ENCODE measurements at regions of chr5 and their contacts with region 1.

Region 1: GRCh38 chr5:59296317-59297264 is 596.9 kb downstream of the PDE4D start:
- DNase-seq: peak; percentile 83
- H3K4me3 ChIP-seq: peak overlapping the region in 2 of 3 experiments; percentile 48 to 70
- H3K27ac ChIP-seq: peak overlapping the region; percentile 73
- H3K4me1 ChIP-seq: peaks cover 63% of the 10 kb centered on the region
- H3K27me3 ChIP-seq: no peaks in the 10 kb centered on the region
- CTCF ChIP-seq: no peak
- POLR2A ChIP-seq: no peak

Region 2: GRCh38 chr5:57779383-57780223 is 1517.0 kb before region 1 on chr5:
- CTCF ChIA-PET with region 1: no interaction called
- POLR2A ChIA-PET with region 1: no interaction called
- dilution Hi-C with region 1: no loop called
- intact Hi-C with region 1: no loop called
- DNase-seq: peak; percentile 90
- H3K4me3 ChIP-seq: peak overlapping the region in 1 of 3 experiments; percentile 3
- H3K27ac ChIP-seq: peak overlapping the region; percentile 71
- H3K4me1 ChIP-seq: peaks cover 37% of the 10 kb centered on the region
- H3K27me3 ChIP-seq: no peaks in the 10 kb centered on the region
- CTCF ChIP-seq: peak; percentile 30 to 53
- POLR2A ChIP-seq: no peak

Region 3: DNA sequence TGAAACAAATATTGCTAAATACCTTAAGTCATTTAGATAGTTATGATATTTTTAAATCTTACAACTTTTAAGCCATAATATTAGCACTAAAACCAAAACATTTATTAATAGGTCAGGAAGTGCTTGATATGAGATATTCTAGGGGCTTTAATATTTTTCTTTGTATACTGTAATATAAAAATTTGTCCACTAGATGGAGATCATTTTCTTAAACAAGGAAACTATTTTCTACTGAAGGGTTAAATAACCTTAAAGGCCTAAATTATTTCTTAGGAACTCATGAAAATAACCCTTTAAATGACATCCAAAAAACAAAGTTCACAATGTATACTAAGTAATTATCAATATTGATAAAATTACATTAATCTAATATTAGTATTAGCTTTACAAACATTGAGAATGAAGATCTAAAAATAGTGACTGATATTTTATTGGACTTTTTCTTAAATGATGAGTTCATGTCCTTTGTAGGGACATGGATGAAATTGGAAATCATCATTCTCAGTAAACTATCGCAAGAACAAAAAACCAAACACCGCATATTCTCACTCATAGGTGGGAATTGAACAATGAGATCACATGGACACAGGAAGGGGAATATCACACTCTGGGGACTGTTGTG is 78.1 kb before region 1 on chr5:
- CTCF ChIA-PET with region 1: interaction called, 11 read pairs
- POLR2A ChIA-PET with region 1: interaction called, 3 read pairs
- dilution Hi-C with region 1: no loop called
- intact Hi-C with region 1: loop called (anchors 1 kb)
- DNase-seq: peak; percentile 54
- H3K4me3 ChIP-seq: no peak overlapping the region
- H3K27ac ChIP-seq: no peak overlapping the region
- H3K4me1 ChIP-seq: peaks cover 19% of the 10 kb centered on the region
- H3K27me3 ChIP-seq: no peaks in the 10 kb centered on the region
- CTCF ChIP-seq: peak in 1 of 2 donors; percentile 2
- POLR2A ChIP-seq: no peak

Region 4: DNA sequence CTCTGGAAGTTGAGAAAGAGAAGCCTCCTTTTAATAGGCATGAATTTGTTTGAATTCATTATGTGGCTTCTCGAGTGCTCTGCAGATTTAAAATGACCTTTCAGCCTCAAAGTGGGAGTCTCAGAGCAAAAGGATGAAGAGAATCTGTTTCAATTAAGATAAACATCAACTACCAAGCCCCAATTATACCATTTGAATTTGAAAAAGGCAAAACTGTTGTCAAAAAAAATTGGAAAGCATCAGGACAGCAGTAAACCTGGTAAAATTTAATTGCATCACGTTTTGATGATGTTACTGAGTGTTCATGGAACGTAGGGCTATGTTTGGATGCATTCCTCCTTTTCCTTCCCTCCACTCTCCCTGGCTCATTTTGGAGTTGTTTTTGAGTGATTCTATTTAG is 40.3 kb before region 1 on chr5:
- CTCF ChIA-PET with region 1: no interaction called
- POLR2A ChIA-PET with region 1: no interaction called
- dilution Hi-C with region 1: no loop called
- intact Hi-C with region 1: no loop called
- DNase-seq: no peak
- H3K4me3 ChIP-seq: no peak overlapping the region
- H3K27ac ChIP-seq: no peak overlapping the region
- H3K4me1 ChIP-seq: peaks cover 5% of the 10 kb centered on the region
- H3K27me3 ChIP-seq: no peaks in the 10 kb centered on the region
- CTCF ChIP-seq: no peak
- POLR2A ChIP-seq: no peak

Region 5: GRCh38 chr5:59275510-59276324 is 20.9 kb before region 1 on chr5:
- CTCF ChIA-PET with region 1: interaction called, 9 read pairs
- POLR2A ChIA-PET with region 1: interaction called, 3 read pairs
- dilution Hi-C with region 1: no loop called
- intact Hi-C with region 1: loop called (anchors 1 kb)
- DNase-seq: peak; percentile 85
- H3K4me3 ChIP-seq: peak overlapping the region; percentile 34 to 97 (median 52)
- H3K27ac ChIP-seq: peak overlapping the region; percentile 90
- H3K4me1 ChIP-seq: peaks cover 25% of the 10 kb centered on the region
- H3K27me3 ChIP-seq: no peaks in the 10 kb centered on the region
- CTCF ChIP-seq: no peak
- POLR2A ChIP-seq: peak; percentile 5

Region 6: DNA sequence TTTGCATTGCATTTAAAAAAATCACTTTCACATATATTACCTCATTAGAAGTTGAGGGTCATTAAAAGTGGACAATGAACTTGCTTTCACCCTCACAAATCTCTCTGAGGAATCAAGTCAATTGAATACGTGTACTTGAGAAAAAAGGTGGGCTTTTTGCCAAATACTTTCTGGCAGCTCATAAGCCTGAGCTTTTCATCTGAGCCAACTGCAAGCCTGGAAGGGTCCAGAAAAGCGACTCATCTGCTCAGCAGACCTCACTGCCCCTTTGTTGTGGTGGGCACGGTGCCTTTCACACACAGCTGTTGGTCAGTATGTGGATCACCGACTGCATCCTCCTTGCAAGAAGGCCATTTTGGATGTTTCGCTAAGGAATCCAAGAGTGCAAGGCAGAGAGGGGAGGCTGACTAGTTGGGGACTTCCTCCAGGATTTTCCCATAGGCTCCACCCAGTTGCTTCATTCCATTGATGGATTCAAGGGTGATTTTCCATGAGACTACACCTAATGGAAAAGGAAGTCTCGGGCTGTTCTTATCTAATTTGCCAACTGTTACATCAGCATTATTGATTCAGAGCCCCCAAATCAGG is 32.2 kb after region 1 on chr5:
- CTCF ChIA-PET with region 1: interaction called, 10 read pairs
- POLR2A ChIA-PET with region 1: no interaction called
- dilution Hi-C with region 1: no loop called
- intact Hi-C with region 1: no loop called
- DNase-seq: peak; percentile 85
- H3K4me3 ChIP-seq: no peak overlapping the region
- H3K27ac ChIP-seq: no peak overlapping the region
- H3K4me1 ChIP-seq: peaks cover 4% of the 10 kb centered on the region
- H3K27me3 ChIP-seq: peaks cover 3% of the 10 kb centered on the region in 2 experiments
- CTCF ChIP-seq: no peak
- POLR2A ChIP-seq: no peak

Region 7: DNA sequence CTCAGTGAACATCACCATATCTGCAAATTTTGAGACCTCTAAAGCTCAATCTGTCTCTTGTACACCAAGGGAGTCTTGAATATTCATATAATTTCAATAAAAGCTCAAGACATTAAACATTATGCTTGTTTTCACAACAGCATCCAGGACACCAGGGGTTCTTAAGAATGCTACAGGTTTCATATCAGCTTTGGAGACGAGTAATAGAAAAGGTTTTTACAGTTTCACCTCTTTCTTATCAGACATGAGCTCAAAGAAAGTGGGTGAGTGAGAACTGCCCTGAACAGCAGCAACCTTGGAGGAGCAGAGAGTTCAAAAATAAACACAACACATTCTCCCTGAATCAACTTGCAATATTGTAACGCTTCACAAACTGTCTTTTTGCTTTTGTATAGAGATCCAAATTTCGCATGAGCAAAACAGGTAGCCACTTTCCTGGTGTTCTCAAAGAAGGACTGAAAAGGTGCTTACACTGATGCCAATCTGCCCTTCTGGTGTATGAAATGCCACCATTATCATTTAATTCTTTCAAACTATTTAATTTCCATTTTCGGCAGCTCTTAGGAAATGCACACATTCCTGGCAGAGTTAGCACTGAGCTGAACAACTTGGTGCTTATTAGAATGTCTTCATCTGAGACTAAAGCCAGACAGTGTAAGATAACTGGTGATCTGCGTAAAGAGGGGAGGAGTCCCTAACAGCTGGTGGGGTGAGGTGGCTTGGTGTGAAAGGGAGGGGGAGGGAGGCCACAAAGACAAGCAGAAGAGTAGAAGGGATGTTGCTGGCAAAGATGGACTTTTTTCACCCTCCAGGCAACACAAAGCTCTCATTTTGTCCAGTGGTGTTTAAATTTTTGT is 61.6 kb after region 1 on chr5:
- CTCF ChIA-PET with region 1: no interaction called
- POLR2A ChIA-PET with region 1: no interaction called
- dilution Hi-C with region 1: no loop called
- intact Hi-C with region 1: loop called (anchors 5 kb)
- DNase-seq: no peak
- H3K4me3 ChIP-seq: no peak overlapping the region
- H3K27ac ChIP-seq: no peak overlapping the region
- H3K4me1 ChIP-seq: peaks cover 11% of the 10 kb centered on the region
- H3K27me3 ChIP-seq: no peaks in the 10 kb centered on the region
- CTCF ChIP-seq: no peak
- POLR2A ChIP-seq: no peak